ENCODE measurements at regions of chr9 and their contacts with region 1.

Region 1: GRCh38 chr9:2281031-2281802 is 266.1 kb downstream of the SMARCA2 start:
- DNase-seq: no peak
- H3K4me3 Mint-ChIP-seq: no peak overlapping the region
- H3K27ac Mint-ChIP-seq: no peak overlapping the region
- H3K4me1 Mint-ChIP-seq: peaks cover 5% of the 10 kb centered on the region
- H3K27me3 Mint-ChIP-seq: peaks cover 12% of the 10 kb centered on the region
- CTCF ChIP-seq: no peak

Region 2: GRCh38 chr9:2241836-2242741 is 39.1 kb before region 1 on chr9:
- CTCF ChIA-PET with region 1: no interaction called
- POLR2A ChIA-PET with region 1: interaction called, 3 read pairs
- intact Hi-C with region 1: loop called (anchors 1 kb)
- DNase-seq: peak; percentile 84
- H3K4me3 Mint-ChIP-seq: peak overlapping the region; percentile 76
- H3K27ac Mint-ChIP-seq: peak overlapping the region; percentile 54
- H3K4me1 Mint-ChIP-seq: peaks cover 18% of the 10 kb centered on the region
- H3K27me3 Mint-ChIP-seq: no peaks in the 10 kb centered on the region
- CTCF ChIP-seq: no peak